Calu3 (cell line): ENCODE measurements at regions of chr12 and their contacts with region 1.

Region 1: DNA sequence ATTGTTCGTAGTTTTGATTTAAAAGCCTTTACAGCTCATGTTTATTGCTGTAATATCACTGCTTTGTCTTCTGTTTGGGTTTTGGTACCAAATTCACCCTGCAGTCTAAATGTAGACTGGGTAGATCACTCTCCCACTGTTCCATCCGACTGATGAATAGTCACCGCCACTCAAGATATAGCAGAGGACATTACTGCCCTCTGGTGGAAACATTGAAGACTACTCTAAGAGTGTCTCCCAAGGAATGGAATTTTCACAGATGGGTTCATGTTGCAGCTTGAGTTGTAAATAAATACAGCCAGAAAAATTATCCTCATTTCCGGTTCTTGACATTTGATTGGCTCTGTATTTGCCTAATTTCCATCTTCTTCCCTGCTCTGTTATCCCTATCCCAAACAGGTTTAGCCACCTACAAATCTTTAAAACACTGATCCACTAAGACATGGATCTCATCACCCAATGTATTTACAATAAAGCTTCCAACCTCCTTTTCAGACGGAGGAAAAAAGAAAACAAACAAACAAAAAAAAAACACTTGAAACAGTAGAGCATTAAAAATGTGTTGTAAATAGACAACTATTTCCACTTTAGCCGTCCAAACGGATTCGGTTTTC is 198.3 kb upstream of the CPNE8 start:
- DNase-seq: peak; percentile 40
- H3K4me3 Mint-ChIP-seq: no peak overlapping the region
- H3K27ac Mint-ChIP-seq: no peak overlapping the region
- H3K4me1 Mint-ChIP-seq: peaks cover 15% of the 10 kb centered on the region
- H3K27me3 Mint-ChIP-seq: no peaks in the 10 kb centered on the region
- CTCF ChIP-seq: peak; percentile 41

Region 2: GRCh38 chr12:38332814-38333213 is 770.8 kb before region 1 on chr12:
- CTCF ChIA-PET with region 1: no interaction called
- intact Hi-C with region 1: loop called (anchors 2 kb)
- DNase-seq: no peak
- H3K4me3 Mint-ChIP-seq: no peak overlapping the region
- H3K27ac Mint-ChIP-seq: no peak overlapping the region
- H3K4me1 Mint-ChIP-seq: no peaks in the 10 kb centered on the region
- H3K27me3 Mint-ChIP-seq: no peaks in the 10 kb centered on the region
- CTCF ChIP-seq: no peak

Region 3: GRCh38 chr12:38664661-38665269 is 438.9 kb before region 1 on chr12:
- CTCF ChIA-PET with region 1: no interaction called
- intact Hi-C with region 1: loop called (anchors 10 kb)
- DNase-seq: peak; percentile 8
- H3K4me3 Mint-ChIP-seq: no peak overlapping the region
- H3K27ac Mint-ChIP-seq: no peak overlapping the region
- H3K4me1 Mint-ChIP-seq: no peaks in the 10 kb centered on the region
- H3K27me3 Mint-ChIP-seq: no peaks in the 10 kb centered on the region
- CTCF ChIP-seq: peak; percentile 18

Region 4: GRCh38 chr12:38921025-38921677 is 182.5 kb before region 1 on chr12:
- CTCF ChIA-PET with region 1: interaction called, 40 read pairs
- intact Hi-C with region 1: loop called (anchors 1 kb)
- DNase-seq: peak; percentile 48
- H3K4me3 Mint-ChIP-seq: no peak overlapping the region
- H3K27ac Mint-ChIP-seq: no peak overlapping the region
- H3K4me1 Mint-ChIP-seq: peaks cover under 1% of the 10 kb centered on the region
- H3K27me3 Mint-ChIP-seq: no peaks in the 10 kb centered on the region
- CTCF ChIP-seq: peak; percentile 37

Region 5: GRCh38 chr12:39116867-39117266 is 13.2 kb after region 1 on chr12:
- CTCF ChIA-PET with region 1: no interaction called
- intact Hi-C with region 1: no loop called
- DNase-seq: no peak
- H3K4me3 Mint-ChIP-seq: no peak overlapping the region
- H3K27ac Mint-ChIP-seq: no peak overlapping the region
- H3K4me1 Mint-ChIP-seq: no peaks in the 10 kb centered on the region
- H3K27me3 Mint-ChIP-seq: no peaks in the 10 kb centered on the region
- CTCF ChIP-seq: no peak